Astrocyte of the cerebellum (primary cell): ENCODE measurements at regions of chr5 and their contacts with region 1.

Region 1: GRCh38 chr5:124783794-124784193 is 37.4 kb upstream of the ZNF608 start:
- DNase-seq: no peak
- H3K4me3 ChIP-seq: no peak overlapping the region
- CTCF ChIP-seq: no peak

Region 2: GRCh38 chr5:124831687-124832240 is 48.0 kb after region 1 on chr5:
- in situ Hi-C with region 1: loop called (anchors 5 kb)
- DNase-seq: no peak
- H3K4me3 ChIP-seq: no peak overlapping the region
- CTCF ChIP-seq: no peak